Right ventricle myocardium inferior (tissue), 1 donor: ENCODE measurements at regions of chr20 and their contacts with region 1.

Region 1: DNA sequence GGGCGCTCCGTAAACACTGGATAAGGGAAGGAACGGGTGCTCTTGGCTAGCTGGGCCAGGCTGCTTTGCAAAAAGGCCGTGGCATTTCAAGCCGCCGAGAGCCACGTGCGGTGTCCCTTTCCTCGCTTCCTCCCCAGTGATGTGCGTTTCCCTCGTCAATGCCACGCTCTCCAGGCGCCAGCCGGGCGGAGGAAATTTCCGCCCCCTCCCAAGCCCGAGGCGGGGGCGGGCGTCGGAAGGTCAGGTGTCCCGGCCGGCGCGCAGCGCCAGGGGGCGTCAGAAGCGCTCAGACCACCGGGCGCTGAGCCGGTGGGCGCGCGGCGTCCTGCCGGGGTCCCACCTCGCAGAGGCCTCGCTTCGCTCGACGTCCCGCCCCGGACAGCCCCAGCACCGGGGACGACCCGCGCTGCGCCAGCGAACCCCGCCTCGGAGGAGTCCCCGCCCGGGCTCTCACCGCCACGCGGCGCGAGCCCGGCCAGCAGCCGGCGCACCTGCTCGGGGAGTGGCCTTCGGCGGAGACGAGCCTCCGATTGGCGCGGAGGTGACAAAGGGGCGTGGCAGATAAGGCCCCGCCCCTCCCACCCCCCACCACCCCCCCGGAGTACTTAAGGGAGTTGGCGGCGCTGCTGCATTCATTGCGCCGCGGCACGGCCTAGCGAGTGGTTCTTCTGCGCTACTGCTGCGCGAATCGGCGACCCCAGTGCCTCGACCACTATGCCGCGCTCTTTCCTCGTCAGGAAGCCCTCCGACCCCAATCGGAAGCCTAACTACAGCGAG is at the start of gene SNAI1:
- DNase-seq: peak; percentile 89
- ATAC-seq: peak; percentile 87
- total RNA-seq, gene SNAI1: 0.73 TPM

Region 2: DNA sequence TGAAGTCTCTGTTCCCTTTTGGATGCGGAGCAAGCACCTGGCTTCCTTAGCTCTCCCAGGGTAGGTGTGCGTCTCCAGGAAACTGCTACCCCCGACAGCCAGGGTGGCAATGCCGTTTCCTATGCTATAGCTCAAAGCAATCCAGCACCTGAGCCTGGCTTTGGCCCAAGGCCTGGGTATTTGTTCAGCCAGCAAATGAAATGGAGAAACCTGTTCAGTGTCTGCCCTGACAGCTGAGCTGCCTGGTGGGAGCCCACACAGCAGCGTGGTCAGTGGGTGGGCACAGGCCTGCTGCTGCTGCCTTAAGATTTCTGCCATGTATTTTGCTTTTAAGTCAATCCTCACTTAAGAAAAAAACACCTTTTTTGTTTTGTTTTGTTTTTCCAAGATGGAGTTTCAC is 80.9 kb before region 1 on chr20:
- intact Hi-C with region 1: no loop called
- DNase-seq: no peak
- ATAC-seq: no peak

Region 3: GRCh38 chr20:50070991-50071888 is 88.7 kb after region 1 on chr20:
- intact Hi-C with region 1: loop called (anchors 1 kb)
- DNase-seq: peak; percentile 97
- ATAC-seq: peak; percentile 95

Region 4: GRCh38 chr20:50085452-50086365 is 103.2 kb after region 1 on chr20:
- intact Hi-C with region 1: loop called (anchors 5 kb)
- DNase-seq: peak; percentile 57
- ATAC-seq: peak; percentile 66

Region 5: GRCh38 chr20:50169329-50169831 is 186.8 kb after region 1 on chr20:
- intact Hi-C with region 1: loop called (anchors 1 kb)
- DNase-seq: no peak
- ATAC-seq: no peak